MCF 10A (cell line): ENCODE measurements at regions of chr3 and their contacts with region 1.

Region 1: GRCh38 chr3:128133273-128134084 is 9.9 kb upstream of the RUVBL1 start:
- DNase-seq: peak; percentile 75
- H3K4me3 Mint-ChIP-seq: no peak overlapping the region
- H3K27ac Mint-ChIP-seq: no peak overlapping the region
- H3K4me1 Mint-ChIP-seq: no peaks in the 10 kb centered on the region
- H3K27me3 Mint-ChIP-seq: peaks cover 18% of the 10 kb centered on the region
- CTCF ChIP-seq: peak; percentile 80

Region 2: DNA sequence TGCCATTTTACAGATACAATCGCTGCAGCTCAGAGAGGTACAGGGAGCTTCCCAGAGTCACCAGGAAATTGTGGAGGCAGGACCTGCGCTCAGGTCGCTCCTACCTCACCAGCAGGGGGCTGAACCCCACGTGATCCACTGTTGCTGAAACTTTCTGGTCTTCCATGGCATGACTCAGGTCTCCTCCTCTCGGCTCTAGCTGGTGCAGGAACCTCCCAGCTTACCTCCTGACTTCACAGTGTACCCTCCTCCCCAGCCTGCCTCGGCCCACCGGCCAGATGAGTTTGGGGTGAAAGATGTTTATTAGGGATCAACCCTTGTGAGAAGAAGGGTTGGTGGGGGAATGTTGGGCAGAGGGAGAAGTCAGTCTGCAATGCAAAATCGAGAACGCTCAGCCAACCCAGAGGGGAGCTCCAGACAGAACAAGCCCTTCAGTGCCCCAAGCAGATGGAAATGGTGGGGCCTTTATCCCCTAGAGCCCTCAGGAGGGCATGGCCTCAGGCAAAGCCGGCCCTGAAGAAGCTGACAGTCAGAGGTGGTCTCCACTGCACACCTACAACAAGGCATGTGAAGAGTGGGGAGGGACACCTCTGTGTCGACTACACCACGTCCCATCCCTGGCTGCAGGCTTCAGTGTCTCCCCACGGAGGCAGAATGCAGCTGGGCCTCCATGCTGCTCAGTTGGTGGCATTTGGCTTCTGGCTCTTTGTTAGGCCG is 727.0 kb before region 1 on chr3:
- CTCF ChIA-PET with region 1: no interaction called
- POLR2A ChIA-PET with region 1: no interaction called
- intact Hi-C with region 1: no loop called
- DNase-seq: peak; percentile 80
- H3K4me3 Mint-ChIP-seq: no peak overlapping the region
- H3K27ac Mint-ChIP-seq: no peak overlapping the region
- H3K4me1 Mint-ChIP-seq: peaks cover 5% of the 10 kb centered on the region
- H3K27me3 Mint-ChIP-seq: no peaks in the 10 kb centered on the region
- CTCF ChIP-seq: peak; percentile 37

Region 3: GRCh38 chr3:128075516-128076482 is 57.7 kb before region 1 on chr3:
- CTCF ChIA-PET with region 1: interaction called, 4 read pairs
- POLR2A ChIA-PET with region 1: no interaction called
- intact Hi-C with region 1: loop called (anchors 1 kb)
- DNase-seq: peak; percentile 70
- H3K4me3 Mint-ChIP-seq: peak overlapping the region; percentile 72
- H3K27ac Mint-ChIP-seq: no peak overlapping the region
- H3K4me1 Mint-ChIP-seq: peaks cover 7% of the 10 kb centered on the region
- H3K27me3 Mint-ChIP-seq: no peaks in the 10 kb centered on the region
- CTCF ChIP-seq: peak; percentile 89

Region 4: DNA sequence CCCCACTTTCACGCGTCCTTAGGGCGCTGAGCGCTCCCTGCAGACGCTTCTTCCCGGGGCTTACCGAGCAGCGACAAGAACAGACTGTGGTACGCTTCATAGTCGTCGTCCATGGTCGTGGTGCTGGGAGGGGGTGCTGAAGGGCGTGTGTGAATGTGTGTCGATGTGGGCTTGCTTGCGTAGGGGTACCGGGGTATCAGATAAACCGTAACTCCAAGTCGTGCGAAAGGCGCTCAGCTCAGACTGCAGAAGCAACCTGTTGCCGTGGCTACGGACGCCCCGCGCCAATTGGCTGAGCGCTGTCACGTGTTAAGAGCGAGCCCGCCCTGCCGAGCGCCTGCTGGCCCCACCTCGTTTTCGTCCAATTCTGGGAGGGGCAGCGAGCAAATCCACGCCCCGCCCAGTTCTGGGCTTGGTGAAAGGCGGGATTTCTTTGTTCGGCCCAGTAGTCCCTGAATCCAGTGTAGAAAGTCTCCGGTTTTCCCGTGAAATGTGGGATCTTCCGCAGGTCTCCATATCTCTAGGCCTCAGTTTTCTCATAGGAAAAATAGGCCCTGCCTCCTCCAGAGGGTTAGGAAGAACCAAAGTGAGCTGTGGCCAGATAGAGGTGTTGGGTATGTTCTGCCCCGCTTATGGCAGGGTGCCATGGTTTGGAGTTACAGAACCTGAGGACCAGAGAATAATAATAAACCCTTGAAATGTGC is 1295.0 kb after region 1 on chr3 and contains the start of gene EFCAB12:
- CTCF ChIA-PET with region 1: no interaction called
- POLR2A ChIA-PET with region 1: no interaction called
- intact Hi-C with region 1: no loop called
- DNase-seq: peak; percentile 78
- H3K4me3 Mint-ChIP-seq: peak within 1 kb of the TSS; percentile 67
- H3K27ac Mint-ChIP-seq: no peak within 1 kb of the TSS
- H3K4me1 Mint-ChIP-seq: peaks cover 14% of the 10 kb centered on the region
- H3K27me3 Mint-ChIP-seq: no peaks in the 10 kb centered on the region
- CTCF ChIP-seq: no peak
- total RNA-seq, gene EFCAB12: 0.22 TPM in 1 of 2 replicates, not detected in the other